ENCODE measurements at regions of chr3 and their contacts with region 1.

Region 1: DNA sequence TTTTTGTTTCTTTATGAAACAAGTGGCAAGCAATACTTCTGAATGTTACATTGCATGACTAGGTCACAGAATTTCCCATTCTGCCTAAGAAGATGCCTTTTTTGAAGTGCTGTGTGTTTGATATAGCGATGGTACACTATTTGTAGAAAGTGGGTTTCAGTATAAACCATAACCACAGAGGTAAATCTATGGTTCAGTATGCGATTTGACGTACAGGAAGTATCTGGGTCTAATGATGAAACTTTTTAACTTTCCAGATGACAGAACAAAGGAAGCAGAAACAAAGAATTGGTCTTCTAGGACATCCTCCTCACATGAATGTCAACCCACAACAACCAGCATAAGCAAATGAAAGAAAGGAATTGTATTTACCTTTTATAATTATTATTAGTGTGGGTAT is 133.4 kb upstream of the BHLHE40 start:
- DNase-seq: no peak
- H3K4me3 Mint-ChIP-seq: peak overlapping the region; percentile 14
- H3K27ac Mint-ChIP-seq: peak overlapping the region; percentile 83
- H3K4me1 Mint-ChIP-seq: peaks cover 96% of the 10 kb centered on the region
- H3K27me3 Mint-ChIP-seq: no peaks in the 10 kb centered on the region

Region 2: GRCh38 chr3:4888913-4889846 is 43.3 kb after region 1 on chr3:
- CTCF ChIA-PET with region 1: no interaction called
- POLR2A ChIA-PET with region 1: no interaction called
- intact Hi-C with region 1: loop called (anchors 1 kb)
- DNase-seq: peak; percentile 67
- H3K4me3 Mint-ChIP-seq: no peak overlapping the region
- H3K27ac Mint-ChIP-seq: peak overlapping the region; percentile 90
- H3K4me1 Mint-ChIP-seq: peaks cover 31% of the 10 kb centered on the region
- H3K27me3 Mint-ChIP-seq: no peaks in the 10 kb centered on the region

Measured in activated CD4-positive, alpha-beta memory T cell treated with anti-CD3 and anti-CD28 coated beads for 36 hours (primary cell).